ENCODE measurements at regions of chr1 and their contacts with region 1.

Region 1: DNA sequence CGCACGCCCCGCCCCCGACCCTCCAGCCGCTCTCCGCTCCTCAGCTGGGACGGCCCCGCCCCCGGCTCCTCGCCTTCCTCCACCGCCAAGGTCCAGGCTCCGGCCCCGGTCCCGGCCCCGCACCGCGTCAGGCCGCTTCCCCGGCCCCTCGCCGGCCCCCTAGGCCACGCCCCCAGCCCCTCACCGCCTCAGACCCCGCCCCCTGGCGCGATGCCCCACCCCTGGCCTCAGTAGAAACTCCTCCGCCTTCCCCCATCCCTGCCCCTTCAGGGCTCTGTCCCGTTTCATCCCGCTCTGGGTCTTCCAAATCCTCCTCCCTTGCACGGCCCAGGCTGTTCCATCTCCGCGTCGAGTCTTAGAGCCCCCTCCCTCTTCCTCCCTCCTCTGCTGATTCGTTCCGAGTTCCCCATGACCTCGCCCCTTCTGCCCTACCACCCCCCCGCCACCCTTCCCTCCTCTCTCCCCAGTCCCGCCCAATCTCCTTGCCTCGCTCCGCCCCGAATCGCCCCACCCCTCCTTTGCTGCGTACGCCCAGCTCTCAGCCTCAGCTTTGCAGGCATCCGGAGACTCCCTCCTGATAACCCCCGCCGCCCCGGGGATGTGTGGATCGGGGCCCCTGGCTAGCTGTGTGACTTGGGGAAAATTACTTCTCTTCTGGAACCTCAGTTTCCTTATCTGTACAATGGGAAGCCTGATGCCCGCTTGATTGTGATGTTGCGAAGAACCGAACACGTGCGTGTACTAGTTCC is 448 bp upstream of the ASAP3 start:
- DNase-seq: peak; percentile 81
- H3K4me3 Mint-ChIP-seq: peak overlapping the region; percentile 87
- H3K27ac Mint-ChIP-seq: peak overlapping the region; percentile 44
- H3K4me1 Mint-ChIP-seq: peaks cover 16% of the 10 kb centered on the region
- H3K27me3 Mint-ChIP-seq: peaks cover 61% of the 10 kb centered on the region

Region 2: DNA sequence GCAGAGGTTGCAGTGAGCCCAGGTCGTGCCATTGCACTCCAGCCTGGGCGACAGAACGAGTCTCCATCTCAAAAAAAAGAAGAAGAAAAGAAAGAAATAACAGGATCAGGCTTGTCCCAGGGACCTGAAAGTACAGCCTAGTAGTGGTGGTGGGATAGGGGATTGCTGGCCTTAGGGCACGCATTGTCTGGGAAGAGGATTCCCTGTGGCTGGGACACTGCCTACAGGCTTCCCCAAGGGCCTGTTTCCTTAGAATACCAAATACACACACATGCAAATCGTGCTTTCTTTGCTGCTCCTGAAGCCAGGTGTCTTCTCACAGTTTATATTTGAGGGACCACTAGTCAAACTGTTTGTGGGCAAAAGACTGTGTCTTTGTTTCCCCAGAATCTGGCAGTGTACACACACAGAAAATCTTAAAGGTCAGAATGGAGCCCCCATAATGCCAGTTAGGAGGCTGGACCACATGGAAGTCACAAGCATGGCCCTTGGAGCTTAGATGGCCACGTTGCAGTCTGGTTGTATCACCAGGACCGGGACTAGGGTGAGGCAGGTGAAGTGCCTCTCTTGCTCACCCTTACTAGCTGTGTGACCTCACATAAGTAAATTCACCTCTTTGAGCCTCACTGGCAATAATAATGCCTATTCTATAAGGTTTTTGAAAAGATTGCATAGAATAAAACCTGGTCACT is 12.2 kb after region 1 on chr1:
- intact Hi-C with region 1: loop called (anchors 1 kb)
- DNase-seq: no peak
- H3K4me3 Mint-ChIP-seq: no peak overlapping the region
- H3K27ac Mint-ChIP-seq: no peak overlapping the region
- H3K4me1 Mint-ChIP-seq: no peaks in the 10 kb centered on the region
- H3K27me3 Mint-ChIP-seq: peaks cover 4% of the 10 kb centered on the region

Region 3: DNA sequence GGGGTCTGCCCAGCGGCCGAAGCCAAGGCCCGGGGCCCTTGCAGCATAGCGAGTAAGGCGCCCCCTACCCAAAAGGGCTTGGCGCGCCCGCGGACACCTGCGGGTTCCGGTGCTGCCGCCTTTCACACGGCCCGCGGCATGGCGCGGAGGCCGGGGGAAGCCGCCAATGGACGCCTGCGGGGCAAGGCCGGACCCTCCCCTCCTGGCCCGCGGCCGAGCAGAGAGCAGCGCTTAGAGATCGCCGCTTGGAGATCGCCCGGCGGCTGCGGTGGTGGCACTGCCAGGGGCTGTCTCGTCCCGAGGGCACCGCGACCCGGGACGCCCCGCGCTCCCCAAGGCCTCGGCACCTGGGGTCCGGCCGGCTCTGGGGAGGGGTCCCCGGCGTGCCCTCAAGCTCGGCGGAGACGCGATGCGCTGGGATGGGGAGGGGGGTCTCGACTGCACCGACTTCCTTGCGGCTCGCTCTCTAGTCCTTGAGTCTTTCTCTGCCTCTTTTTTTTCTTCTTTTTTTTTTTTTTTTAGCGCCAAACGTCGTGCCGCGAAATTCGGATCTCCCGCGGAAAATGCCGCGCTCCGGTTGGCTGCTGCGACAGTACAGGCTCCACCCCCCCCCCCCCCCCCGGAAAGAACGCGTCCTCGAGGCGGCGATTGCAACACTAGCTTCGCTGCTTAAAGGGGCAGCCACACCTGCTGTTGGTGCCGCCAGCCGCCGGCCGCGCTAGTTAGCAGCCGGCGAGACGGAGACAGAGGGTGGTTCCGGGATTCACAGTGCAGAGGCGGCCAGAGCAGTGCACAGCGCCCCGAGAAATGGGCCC is 46.5 kb after region 1 on chr1 and contains the start of gene E2F2:
- intact Hi-C with region 1: loop called (anchors 1 kb)
- DNase-seq: peak; percentile 76
- H3K4me3 Mint-ChIP-seq: peak within 1 kb of the TSS; percentile 96
- H3K27ac Mint-ChIP-seq: peak within 1 kb of the TSS; percentile 97
- H3K4me1 Mint-ChIP-seq: peaks cover 84% of the 10 kb centered on the region
- H3K27me3 Mint-ChIP-seq: no peaks in the 10 kb centered on the region
- total RNA-seq, gene E2F2: 32.0 and 33.5 TPM in 2 replicates

Region 4: GRCh38 chr1:23539698-23540266 is 55.4 kb after region 1 on chr1:
- intact Hi-C with region 1: loop called (anchors 1 kb)
- DNase-seq: peak; percentile 90
- H3K4me3 Mint-ChIP-seq: peak overlapping the region; percentile 31
- H3K27ac Mint-ChIP-seq: peak overlapping the region; percentile 24
- H3K4me1 Mint-ChIP-seq: peaks cover 23% of the 10 kb centered on the region
- H3K27me3 Mint-ChIP-seq: no peaks in the 10 kb centered on the region